ENCODE measurements at regions of chr10 and their contacts with region 1.

Region 1: DNA sequence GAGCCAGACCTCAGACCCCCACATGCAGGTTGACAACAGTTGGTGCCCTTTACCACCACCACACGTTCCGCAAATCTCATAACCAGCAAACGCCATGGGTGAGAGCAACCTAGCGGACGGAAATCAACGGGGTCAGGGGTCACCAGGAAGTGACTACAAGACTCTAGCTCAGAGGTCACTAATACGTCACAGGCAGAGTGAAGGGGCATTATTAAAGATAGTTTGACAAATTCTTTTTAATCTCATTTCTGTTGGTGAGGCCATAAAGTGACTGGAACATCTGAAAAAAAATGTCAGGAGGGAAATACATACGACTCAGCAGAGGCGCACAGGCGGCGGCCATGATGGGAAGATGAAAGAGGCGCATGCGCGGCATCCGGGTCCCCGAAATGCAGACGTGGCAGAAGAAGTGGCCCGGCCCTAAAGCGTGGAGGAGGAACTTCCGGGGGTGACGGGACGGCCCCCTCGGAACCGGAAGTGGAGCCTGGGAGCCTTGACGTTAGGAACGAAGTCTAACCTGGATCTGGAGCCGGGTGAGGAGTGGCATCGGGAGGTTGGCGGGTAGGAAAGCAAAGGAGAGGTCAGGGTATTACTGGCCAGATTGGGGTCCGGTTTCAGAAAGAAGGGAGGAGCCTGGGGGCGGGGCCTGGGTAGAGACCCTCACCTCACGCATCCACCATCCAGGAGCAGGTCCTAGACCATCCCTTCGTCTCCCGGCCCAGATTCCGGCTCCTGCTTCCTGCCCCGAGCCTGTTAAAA is at the start of gene SEC24C:
- DNase-seq: peak; percentile 90 to 99 (median 94)
- ATAC-seq: peak; percentile 85
- H3K4me3 ChIP-seq: peak within 1 kb of the TSS; percentile 93
- H3K4me3 Mint-ChIP-seq: peak within 1 kb of the TSS; percentile 99
- H3K27ac ChIP-seq: peak within 1 kb of the TSS; percentile 90 to 99
- H3K27ac Mint-ChIP-seq: peak within 1 kb of the TSS; percentile 99
- H3K4me1 ChIP-seq: peaks cover 48% of the 10 kb centered on the region
- H3K4me1 Mint-ChIP-seq: peaks cover 41% of the 10 kb centered on the region
- H3K27me3 ChIP-seq: no peaks in the 10 kb centered on the region
- H3K27me3 Mint-ChIP-seq: no peaks in the 10 kb centered on the region
- CTCF ChIP-seq: no peak
- total RNA-seq, gene SEC24C: 52.0 to 54.2 TPM

Region 2: GRCh38 chr10:73730153-73730906 is 13.8 kb before region 1 on chr10:
- CTCF ChIA-PET with region 1: interaction called, 3 read pairs
- POLR2A ChIA-PET with region 1: interaction called, 84 read pairs
- intact Hi-C with region 1: loop called (anchors 1 to 2 kb)
- DNase-seq: peak; percentile 78 to 94 (median 90)
- ATAC-seq: peak; percentile 90
- H3K4me3 ChIP-seq: peak overlapping the region; percentile 87
- H3K4me3 Mint-ChIP-seq: peak overlapping the region; percentile 98
- H3K27ac ChIP-seq: peak overlapping the region; percentile 77 to 86
- H3K27ac Mint-ChIP-seq: peak overlapping the region; percentile 94
- H3K4me1 ChIP-seq: peaks cover 27% of the 10 kb centered on the region
- H3K4me1 Mint-ChIP-seq: peaks cover 31% of the 10 kb centered on the region
- H3K27me3 ChIP-seq: no peaks in the 10 kb centered on the region
- H3K27me3 Mint-ChIP-seq: no peaks in the 10 kb centered on the region
- CTCF ChIP-seq: no peak

Region 3: GRCh38 chr10:73785221-73785720 is 41.2 kb after region 1 on chr10 and contains the start of gene ZSWIM8:
- CTCF ChIA-PET with region 1: no interaction called
- POLR2A ChIA-PET with region 1: interaction called, 12 read pairs
- intact Hi-C with region 1: loop called (anchors 1 kb)
- DNase-seq: peak; percentile 69 to 95 (median 82)
- ATAC-seq: peak; percentile 83
- H3K4me3 ChIP-seq: peak within 1 kb of the TSS; percentile 94
- H3K4me3 Mint-ChIP-seq: peak within 1 kb of the TSS; percentile 98
- H3K27ac ChIP-seq: peak within 1 kb of the TSS; percentile 80
- H3K27ac Mint-ChIP-seq: peak within 1 kb of the TSS; percentile 96
- H3K4me1 ChIP-seq: peaks cover 38% of the 10 kb centered on the region
- H3K4me1 Mint-ChIP-seq: peaks cover 61% of the 10 kb centered on the region
- H3K27me3 ChIP-seq: no peaks in the 10 kb centered on the region
- H3K27me3 Mint-ChIP-seq: no peaks in the 10 kb centered on the region
- CTCF ChIP-seq: no peak
- total RNA-seq, gene ZSWIM8: 66.4 to 70.7 TPM

Region 4: DNA sequence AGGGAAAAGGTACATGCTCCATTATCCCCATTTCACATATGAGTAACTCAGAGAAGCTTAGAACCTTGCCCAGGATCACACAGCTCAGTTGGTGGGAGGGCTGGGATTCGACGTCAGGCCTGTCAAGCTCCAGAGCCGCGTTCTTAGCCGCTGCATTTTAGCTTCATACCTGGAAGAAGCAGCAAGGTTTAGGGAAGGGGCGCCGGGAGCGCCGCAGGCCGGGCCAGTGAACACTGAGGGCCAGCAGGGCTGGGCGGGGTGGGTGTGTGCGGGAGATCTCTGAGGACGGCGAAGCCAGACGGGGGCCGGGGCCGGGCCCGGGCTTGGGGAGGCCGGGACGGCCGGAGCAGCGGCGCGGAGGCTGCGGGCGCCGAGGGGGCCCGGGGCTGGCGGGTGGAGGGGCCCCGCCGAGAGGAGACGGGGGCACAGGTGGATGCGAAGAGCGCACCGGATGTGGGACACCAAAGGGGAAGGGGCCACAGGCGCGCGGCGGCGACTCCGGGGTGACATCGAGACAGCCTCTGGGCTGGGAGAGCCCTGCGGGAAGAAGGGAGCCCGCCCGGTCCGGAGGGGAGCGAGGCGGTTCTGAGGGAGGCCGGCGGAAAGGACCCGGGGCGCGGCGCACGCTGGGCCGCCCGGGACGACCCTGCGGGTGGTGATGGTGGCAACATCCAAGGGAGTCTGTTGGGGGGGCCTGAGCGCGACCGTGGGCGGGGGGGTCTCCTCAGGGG is 66.8 kb after region 1 on chr10:
- CTCF ChIA-PET with region 1: interaction called, 3 read pairs
- POLR2A ChIA-PET with region 1: interaction called, 8 read pairs
- intact Hi-C with region 1: loop called (anchors 1 to 2 kb)
- DNase-seq: peak in 13 of 14 experiments; percentile 40 to 80 (median 65)
- ATAC-seq: peak; percentile 17
- H3K4me3 ChIP-seq: peak overlapping the region; percentile 70
- H3K4me3 Mint-ChIP-seq: peak overlapping the region; percentile 97
- H3K27ac ChIP-seq: peak overlapping the region; percentile 55 to 91
- H3K27ac Mint-ChIP-seq: peak overlapping the region; percentile 99
- H3K4me1 ChIP-seq: peaks cover 53% of the 10 kb centered on the region
- H3K4me1 Mint-ChIP-seq: peaks cover 52% of the 10 kb centered on the region
- H3K27me3 ChIP-seq: no peaks in the 10 kb centered on the region
- H3K27me3 Mint-ChIP-seq: no peaks in the 10 kb centered on the region
- CTCF ChIP-seq: no peak

Region 5: DNA sequence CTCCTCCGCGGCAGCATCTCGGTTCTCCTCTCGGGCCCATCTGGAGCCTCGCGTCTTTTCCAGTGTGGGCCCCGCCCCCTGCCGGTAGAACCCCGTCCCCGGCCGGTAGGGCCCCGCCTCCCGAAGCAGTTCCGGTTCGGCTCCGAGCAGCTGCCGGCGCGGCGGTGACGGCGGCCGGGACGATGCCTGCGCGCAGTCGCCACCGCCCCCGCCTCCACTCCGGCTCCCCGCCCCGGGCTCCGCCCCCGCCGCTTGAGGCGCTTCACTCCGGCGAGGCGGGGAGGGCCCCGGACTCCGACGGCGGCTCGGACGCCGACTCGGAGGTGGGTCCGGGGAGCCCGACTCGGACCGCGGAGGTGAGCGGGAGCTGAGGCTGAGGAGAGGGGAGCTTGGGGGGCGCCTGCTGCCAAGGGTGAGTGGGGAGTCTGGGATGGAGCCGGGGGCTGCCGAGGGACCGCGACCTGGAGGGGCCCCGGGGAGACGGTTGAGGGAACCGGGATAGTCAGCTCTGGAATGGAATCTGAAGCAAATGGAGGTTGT is 1367.4 kb after region 1 on chr10 and contains the start of gene SAMD8:
- CTCF ChIA-PET with region 1: no interaction called
- POLR2A ChIA-PET with region 1: no interaction called
- intact Hi-C with region 1: loop called in 1 of 2 experiments (anchors 10 kb)
- DNase-seq: peak; percentile 90 to 99 (median 94)
- ATAC-seq: peak; percentile 80
- H3K4me3 ChIP-seq: peak within 1 kb of the TSS; percentile 97
- H3K4me3 Mint-ChIP-seq: peak within 1 kb of the TSS; percentile 88
- H3K27ac ChIP-seq: peak within 1 kb of the TSS; percentile 92 to 95
- H3K27ac Mint-ChIP-seq: peak within 1 kb of the TSS; percentile 90
- H3K4me1 ChIP-seq: peaks cover 26% of the 10 kb centered on the region
- H3K4me1 Mint-ChIP-seq: peaks cover 62% of the 10 kb centered on the region
- H3K27me3 ChIP-seq: no peaks in the 10 kb centered on the region
- H3K27me3 Mint-ChIP-seq: no peaks in the 10 kb centered on the region
- CTCF ChIP-seq: no peak
- total RNA-seq, gene SAMD8: 34.1 to 37.4 TPM